Ovary (tissue), 10 donors: ENCODE measurements at regions of chr1 and their contacts with region 1.

Region 1: GRCh38 chr1:153494976-153495535 is 34.6 kb upstream of the S100A7 start:
- DNase-seq: peak; percentile 71 to 85 (median 79)
- H3K4me3 ChIP-seq: no peak overlapping the region
- H3K27ac ChIP-seq: no peak overlapping the region
- H3K4me1 ChIP-seq: peaks cover 10% of the 10 kb centered on the region
- H3K27me3 ChIP-seq: no peaks in the 10 kb centered on the region
- CTCF ChIP-seq: peak; percentile 50 to 81 (median 78)
- EP300 ChIP-seq: no peak
- POLR2A ChIP-seq: no peak

Region 2: GRCh38 chr1:153345187-153346076 is 149.6 kb before region 1 on chr1:
- intact Hi-C with region 1: loop called in 3 of 4 experiments (anchors 5 to 10 kb)
- DNase-seq: no peak
- H3K4me3 ChIP-seq: no peak overlapping the region
- H3K27ac ChIP-seq: no peak overlapping the region
- H3K4me1 ChIP-seq: peaks cover 6% of the 10 kb centered on the region
- H3K27me3 ChIP-seq: no peaks in the 10 kb centered on the region
- CTCF ChIP-seq: no peak
- EP300 ChIP-seq: no peak
- POLR2A ChIP-seq: no peak

Region 3: GRCh38 chr1:153352523-153352922 is 142.5 kb before region 1 on chr1:
- intact Hi-C with region 1: loop called (anchors 5 to 10 kb)
- DNase-seq: peak; percentile 61 to 83 (median 77)
- H3K4me3 ChIP-seq: no peak overlapping the region
- H3K27ac ChIP-seq: no peak overlapping the region
- H3K4me1 ChIP-seq: no peaks in the 10 kb centered on the region
- H3K27me3 ChIP-seq: no peaks in the 10 kb centered on the region
- CTCF ChIP-seq: peak; percentile 56 to 85 (median 75)
- EP300 ChIP-seq: no peak
- POLR2A ChIP-seq: no peak